Dendritic cell treated with granulocyte-macrophage colony-stimulating factor and Interleukin-4, amounts not matched to agents 40 ng/mL and 50 ng/mL, for 4 days (primary cell): ENCODE measurements at regions of chr1 and their contacts with region 1.

Region 1: DNA sequence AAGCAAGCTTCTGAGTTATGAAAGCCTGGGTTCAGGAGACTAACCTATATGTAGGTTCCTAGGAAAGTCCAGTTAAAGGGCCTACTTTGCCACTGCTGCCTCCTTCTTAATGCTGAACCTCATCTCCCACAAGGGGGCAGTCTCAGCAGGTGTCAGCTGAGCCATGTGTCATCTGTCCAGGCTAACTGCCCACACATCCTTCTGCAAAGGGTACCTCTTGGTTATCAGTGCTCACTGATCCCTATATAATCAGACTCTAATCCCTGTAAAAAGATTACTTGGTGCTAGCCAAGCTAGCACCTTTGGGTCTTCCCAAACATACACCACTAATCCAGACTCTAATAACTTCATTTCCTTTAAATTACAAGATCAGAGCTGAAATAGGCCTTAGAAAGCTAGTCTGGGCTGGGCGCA is 9.0 kb downstream of the PRDX1 start:
- H3K4me3 Mint-ChIP-seq: no peak overlapping the region
- H3K27ac Mint-ChIP-seq: no peak overlapping the region
- H3K4me1 Mint-ChIP-seq: peaks cover 41% of the 10 kb centered on the region
- H3K27me3 Mint-ChIP-seq: no peaks in the 10 kb centered on the region

Region 2: GRCh38 chr1:45550401-45551351 is 38.0 kb after region 1 on chr1 and contains the start of gene AKR1A1:
- intact Hi-C with region 1: loop called (anchors 1 kb)
- H3K4me3 Mint-ChIP-seq: peak within 1 kb of the TSS; percentile 93
- H3K27ac Mint-ChIP-seq: peak within 1 kb of the TSS; percentile 96
- H3K4me1 Mint-ChIP-seq: peaks cover 43% of the 10 kb centered on the region
- H3K27me3 Mint-ChIP-seq: peaks cover 3% of the 10 kb centered on the region

Region 3: GRCh38 chr1:45569962-45570581 is 57.4 kb after region 1 on chr1:
- intact Hi-C with region 1: loop called (anchors 1 kb)
- H3K4me3 Mint-ChIP-seq: no peak overlapping the region
- H3K27ac Mint-ChIP-seq: peak overlapping the region; percentile 42
- H3K4me1 Mint-ChIP-seq: peaks cover 39% of the 10 kb centered on the region
- H3K27me3 Mint-ChIP-seq: no peaks in the 10 kb centered on the region